ENCODE measurements at regions of chr5 and their contacts with region 1.

Region 1: DNA sequence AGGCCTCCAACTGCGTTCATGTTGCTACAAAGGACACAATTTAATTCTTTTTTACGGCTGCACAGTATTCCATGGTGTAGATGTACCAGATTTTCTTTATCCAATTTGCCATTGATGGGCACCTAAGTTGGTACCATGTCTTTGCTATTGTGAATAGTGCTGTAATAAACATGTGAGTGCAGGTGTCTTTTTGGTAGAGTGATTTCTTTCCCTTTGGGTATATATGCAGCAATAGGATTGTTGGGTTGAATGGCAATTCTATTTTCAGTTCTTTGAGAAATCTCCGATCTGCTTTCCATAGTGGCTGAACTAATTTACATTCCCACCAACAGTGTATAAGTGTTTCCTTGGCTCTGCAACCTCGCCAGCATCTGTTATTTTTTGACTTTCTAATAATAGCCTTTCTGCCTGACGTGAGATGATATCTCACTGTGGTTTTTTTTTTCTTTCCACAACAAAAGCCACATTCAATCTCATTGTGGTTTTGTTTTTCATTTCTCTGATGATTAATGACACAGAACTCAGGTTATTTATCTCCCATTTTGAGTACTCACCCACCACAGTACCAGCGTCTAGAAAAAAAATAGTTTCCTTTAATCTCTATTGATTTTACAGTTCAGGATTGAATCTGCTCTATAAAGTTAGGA is 21.9 kb downstream of the ARRDC3 start:
- DNase-seq: peak; percentile 30
- H3K4me3 ChIP-seq: no peak overlapping the region
- H3K27ac ChIP-seq: peak overlapping the region; percentile 45
- H3K4me1 ChIP-seq: peaks cover 18% of the 10 kb centered on the region
- CTCF ChIP-seq: no peak

Region 2: DNA sequence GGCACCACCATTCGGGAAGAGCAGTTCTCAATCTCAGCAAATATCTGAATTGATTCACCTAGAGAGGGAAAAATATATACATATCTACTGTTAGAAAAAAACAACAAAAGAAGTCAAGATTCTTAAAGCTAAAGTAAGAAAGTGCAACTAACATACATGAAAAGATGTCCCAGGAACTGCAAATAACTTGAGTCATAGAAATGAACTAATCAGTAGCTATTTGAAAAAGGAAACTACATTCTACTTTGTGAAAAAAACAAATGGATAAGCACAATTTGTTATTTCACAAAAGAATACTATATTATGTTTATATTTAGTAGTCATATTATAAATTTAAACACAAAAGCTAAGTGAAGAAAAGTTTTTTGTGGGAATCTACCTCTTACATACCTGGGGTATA is 13.9 kb after region 1 on chr5:
- CTCF ChIA-PET with region 1: no interaction called
- POLR2A ChIA-PET with region 1: interaction called, 11 read pairs
- intact Hi-C with region 1: loop called (anchors 2 kb)
- DNase-seq: no peak
- H3K4me3 ChIP-seq: no peak overlapping the region
- H3K27ac ChIP-seq: no peak overlapping the region
- H3K4me1 ChIP-seq: peaks cover 14% of the 10 kb centered on the region
- CTCF ChIP-seq: no peak

Measured in OCI-LY7 (cell line).